Gastrocnemius medialis (tissue), 4 donors: ENCODE measurements at regions of chr11 and their contacts with region 1.

Region 1: DNA sequence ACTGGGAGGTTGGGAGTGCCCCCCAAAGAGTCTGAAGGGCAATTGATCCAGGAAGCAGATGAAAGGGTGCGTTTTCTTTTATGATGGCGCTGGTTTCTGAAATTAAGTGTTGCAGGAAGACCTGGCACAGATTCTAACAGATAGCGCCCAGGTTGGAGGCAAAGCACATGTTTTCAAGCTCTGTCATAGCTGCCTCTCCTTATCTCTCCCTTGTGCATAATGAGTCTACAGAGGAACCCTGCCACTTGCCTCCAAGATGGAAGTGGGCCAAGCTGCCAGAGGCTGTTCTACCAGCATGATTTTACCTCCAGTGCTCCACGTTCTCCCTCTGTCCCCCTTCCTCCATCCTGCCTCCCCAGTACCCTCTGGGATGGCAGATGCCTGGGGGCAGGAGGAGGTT is 30.0 kb upstream of the TLCD5 start:
- DNase-seq: no peak
- ATAC-seq: no peak
- H3K4me3 ChIP-seq: no peak overlapping the region
- H3K27ac ChIP-seq: no peak overlapping the region
- H3K4me1 ChIP-seq: no peaks in the 10 kb centered on the region
- H3K27me3 ChIP-seq: peaks cover 6 to 17% (median 13%) of the 10 kb centered on the region in 3 donors
- CTCF ChIP-seq: no peak
- POLR2A ChIP-seq: no peak

Region 2: GRCh38 chr11:120172054-120172911 is 122.8 kb before region 1 on chr11:
- in situ Hi-C with region 1: loop called in 3 of 4 experiments (anchors 5 to 10 kb)
- intact Hi-C with region 1: loop called (anchors 1 kb)
- DNase-seq: peak; percentile 38 to 46
- ATAC-seq: peak; percentile 28 to 70
- H3K4me3 ChIP-seq: no peak overlapping the region
- H3K27ac ChIP-seq: no peak overlapping the region
- H3K4me1 ChIP-seq: peaks cover 0 to 4% of the 10 kb centered on the region in 2 donors
- H3K27me3 ChIP-seq: peaks cover 25 to 28% (median 27%) of the 10 kb centered on the region in 3 donors
- CTCF ChIP-seq: peak; percentile 66 to 80 (median 77)
- POLR2A ChIP-seq: no peak

Region 3: GRCh38 chr11:120235024-120235861 is 59.8 kb before region 1 on chr11:
- in situ Hi-C with region 1: loop called in 1 of 4 experiments (anchors 10 kb)
- intact Hi-C with region 1: loop called (anchors 1 kb)
- DNase-seq: no peak
- ATAC-seq: peak in 1 of 2 donors; percentile 64
- H3K4me3 ChIP-seq: no peak overlapping the region
- H3K27ac ChIP-seq: no peak overlapping the region
- H3K4me1 ChIP-seq: peaks cover 0 to 3% of the 10 kb centered on the region in 2 donors
- H3K27me3 ChIP-seq: peaks cover 10 to 13% (median 10%) of the 10 kb centered on the region in 3 donors
- CTCF ChIP-seq: peak; percentile 37 to 63 (median 60)
- POLR2A ChIP-seq: no peak